ENCODE measurements at regions of chrX and their contacts with region 1.

Region 1: GRCh38 chrX:130975947-130976346 is 72.9 kb upstream of the ENOX2 start:
- DNase-seq: peak; percentile 32 to 35
- H3K4me3 ChIP-seq: no peak overlapping the region
- H3K4me3 Mint-ChIP-seq: no peak overlapping the region
- H3K27ac Mint-ChIP-seq: no peak overlapping the region
- H3K4me1 ChIP-seq: no peaks in the 10 kb centered on the region
- H3K4me1 Mint-ChIP-seq: no peaks in the 10 kb centered on the region
- H3K27me3 ChIP-seq: no peaks in the 10 kb centered on the region
- H3K27me3 Mint-ChIP-seq: peaks cover 6% of the 10 kb centered on the region
- CTCF ChIP-seq: peak in 1 of 2 experiments; percentile 43

Region 2: GRCh38 chrX:131225078-131225477 is 249.1 kb after region 1 on chrX:
- CTCF ChIA-PET with region 1: no interaction called
- POLR2A ChIA-PET with region 1: no interaction called
- intact Hi-C with region 1: loop called (anchors 10 kb)
- DNase-seq: no peak
- H3K4me3 ChIP-seq: no peak overlapping the region
- H3K4me3 Mint-ChIP-seq: no peak overlapping the region
- H3K27ac Mint-ChIP-seq: no peak overlapping the region
- H3K4me1 ChIP-seq: no peaks in the 10 kb centered on the region
- H3K4me1 Mint-ChIP-seq: no peaks in the 10 kb centered on the region
- H3K27me3 ChIP-seq: no peaks in the 10 kb centered on the region
- H3K27me3 Mint-ChIP-seq: peaks cover 14% of the 10 kb centered on the region
- CTCF ChIP-seq: no peak

Region 3: DNA sequence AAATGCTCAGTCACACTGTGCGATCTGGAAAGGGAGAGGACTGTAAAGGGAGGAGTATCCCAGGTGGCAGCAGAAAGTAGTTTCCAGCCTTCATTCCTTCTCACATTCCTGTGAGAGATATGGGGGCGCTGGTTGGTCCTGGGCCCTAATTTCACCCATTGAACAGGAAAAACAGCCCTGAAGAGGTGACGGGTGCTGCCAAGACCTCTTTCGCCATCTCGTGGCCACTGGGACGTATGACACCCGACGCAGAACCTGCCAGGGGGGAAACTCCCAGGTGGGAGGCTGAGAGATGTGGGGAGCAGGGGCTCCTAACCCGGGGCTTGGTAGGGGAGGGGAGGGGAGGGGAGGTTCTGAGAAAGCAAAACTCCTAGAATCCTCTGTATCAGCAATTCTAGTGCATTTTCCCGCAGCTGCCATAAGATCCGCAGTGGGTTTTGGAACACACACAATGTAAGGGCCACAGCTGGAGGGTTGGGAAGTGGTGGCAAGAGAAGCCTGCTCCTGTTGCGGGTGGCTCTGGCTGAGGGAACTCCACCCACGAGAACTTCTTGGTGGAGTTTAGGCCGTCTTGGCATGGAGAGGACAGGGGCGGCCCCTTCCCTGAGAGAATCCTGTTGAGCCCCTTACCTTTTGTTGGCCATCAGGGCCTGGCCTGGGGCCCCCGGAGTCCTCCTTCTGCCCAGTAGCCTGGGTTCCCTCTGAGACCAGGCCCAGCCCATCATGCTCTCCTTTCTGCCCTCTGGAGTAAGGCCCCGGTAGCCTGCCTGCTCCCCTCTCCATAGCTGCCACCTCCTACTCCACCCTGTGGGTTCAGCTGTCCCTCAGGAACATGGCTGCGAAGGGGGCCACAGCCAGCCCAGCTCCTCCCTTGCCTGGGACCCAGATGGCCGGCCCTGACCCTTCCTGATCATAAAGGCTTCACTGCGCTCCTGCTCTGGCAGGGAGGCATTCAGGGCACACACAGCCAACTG is 702.0 kb after region 1 on chrX:
- CTCF ChIA-PET with region 1: no interaction called
- POLR2A ChIA-PET with region 1: no interaction called
- intact Hi-C with region 1: loop called (anchors 1 kb)
- DNase-seq: peak; percentile 42 to 48
- H3K4me3 ChIP-seq: no peak overlapping the region
- H3K4me3 Mint-ChIP-seq: no peak overlapping the region
- H3K27ac Mint-ChIP-seq: no peak overlapping the region
- H3K4me1 ChIP-seq: no peaks in the 10 kb centered on the region
- H3K4me1 Mint-ChIP-seq: no peaks in the 10 kb centered on the region
- H3K27me3 ChIP-seq: no peaks in the 10 kb centered on the region
- H3K27me3 Mint-ChIP-seq: no peaks in the 10 kb centered on the region
- CTCF ChIP-seq: peak; percentile 65 to 70

Region 4: GRCh38 chrX:131763674-131764073 is 787.7 kb after region 1 on chrX:
- CTCF ChIA-PET with region 1: no interaction called
- POLR2A ChIA-PET with region 1: no interaction called
- intact Hi-C with region 1: no loop called
- DNase-seq: no peak
- H3K4me3 ChIP-seq: no peak overlapping the region
- H3K4me3 Mint-ChIP-seq: no peak overlapping the region
- H3K27ac Mint-ChIP-seq: no peak overlapping the region
- H3K4me1 ChIP-seq: no peaks in the 10 kb centered on the region
- H3K4me1 Mint-ChIP-seq: no peaks in the 10 kb centered on the region
- H3K27me3 ChIP-seq: no peaks in the 10 kb centered on the region
- H3K27me3 Mint-ChIP-seq: no peaks in the 10 kb centered on the region
- CTCF ChIP-seq: no peak

Measured in Caco-2 (cell line).